CD4-positive, alpha-beta T cell (primary cell): ENCODE measurements at regions of chr12 and their contacts with region 1.

Region 1: DNA sequence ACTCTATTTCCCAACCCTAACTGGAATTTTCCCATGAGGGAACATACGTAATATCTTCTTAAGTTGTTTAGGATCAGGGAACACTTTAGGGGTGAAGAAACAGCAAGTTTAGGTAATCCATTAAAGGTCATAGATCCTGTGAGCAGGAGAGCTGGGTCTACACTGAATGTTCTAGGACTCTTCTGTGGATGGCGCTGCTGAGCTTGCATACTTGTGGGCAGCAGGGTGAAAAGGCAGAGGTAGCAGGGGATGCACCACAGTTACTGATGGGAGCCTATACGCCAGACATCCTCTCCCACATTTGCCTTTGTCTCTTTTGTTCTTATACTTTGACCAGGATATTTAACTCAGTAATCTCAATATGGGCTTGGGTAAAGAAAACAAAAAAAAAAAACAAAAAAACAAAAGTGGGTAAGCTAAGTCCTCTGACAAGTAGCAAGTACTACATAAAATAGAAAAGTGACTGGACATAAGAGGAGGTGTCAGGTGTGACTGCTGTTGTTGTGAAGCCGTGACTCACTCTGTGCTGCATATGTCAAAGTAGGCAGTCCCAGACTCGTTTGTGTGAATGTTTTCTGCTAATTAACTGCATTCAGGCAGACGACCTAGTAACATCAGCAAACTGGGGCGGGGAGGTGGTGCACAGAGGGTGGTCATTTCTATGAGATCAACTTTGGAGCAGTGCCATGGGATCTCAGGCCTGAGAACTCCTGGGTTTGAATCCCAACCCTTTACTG is 31.6 kb downstream of the NEUROD4 start:
- DNase-seq: no peak
- ATAC-seq: no peak
- H3K4me3 ChIP-seq: no peak overlapping the region
- H3K4me3 Mint-ChIP-seq: no peak overlapping the region
- H3K27ac ChIP-seq: no peak overlapping the region
- H3K27ac Mint-ChIP-seq: no peak overlapping the region
- H3K4me1 ChIP-seq: no peaks in the 10 kb centered on the region
- H3K4me1 Mint-ChIP-seq: no peaks in the 10 kb centered on the region
- H3K27me3 ChIP-seq: no peaks in the 10 kb centered on the region
- H3K27me3 Mint-ChIP-seq: no peaks in the 10 kb centered on the region
- CTCF ChIP-seq: no peak

Region 2: DNA sequence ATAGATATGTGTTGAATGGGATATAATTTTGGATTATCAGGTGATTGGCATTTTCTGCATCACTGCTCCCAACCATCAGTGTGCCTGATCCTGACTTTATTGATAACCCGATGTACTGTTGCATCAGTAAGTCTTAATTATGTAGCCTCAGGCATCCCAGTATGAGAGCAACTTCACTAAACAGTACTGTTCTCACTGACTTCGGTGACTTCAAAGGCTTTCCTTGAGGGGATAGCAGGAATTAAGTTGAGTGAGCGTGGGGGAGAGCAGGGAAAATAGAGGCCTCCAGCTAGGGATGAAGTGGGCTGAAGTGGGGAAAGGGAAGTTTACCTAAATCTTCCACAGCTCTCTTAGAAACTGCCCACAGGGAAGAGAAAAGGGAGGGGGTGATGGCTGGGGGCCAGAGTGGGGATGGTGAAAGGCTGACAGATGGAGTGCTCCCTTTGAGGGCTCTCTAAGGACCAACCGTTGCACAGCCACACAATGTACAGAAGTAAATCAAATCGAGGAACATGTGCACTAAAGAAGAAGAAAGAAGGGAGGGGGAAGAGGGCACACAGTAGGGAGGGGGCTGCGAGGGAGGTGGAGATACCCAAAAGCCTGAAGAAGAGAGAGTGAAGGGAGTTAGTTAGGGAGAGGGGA is 42.3 kb before region 1 on chr12:
- CTCF ChIA-PET with region 1: no interaction called
- POLR2A ChIA-PET with region 1: no interaction called
- intact Hi-C with region 1: loop called in 1 of 2 experiments (anchors 5 kb)
- DNase-seq: no peak
- ATAC-seq: no peak
- H3K4me3 ChIP-seq: no peak overlapping the region
- H3K4me3 Mint-ChIP-seq: no peak overlapping the region
- H3K27ac ChIP-seq: no peak overlapping the region
- H3K27ac Mint-ChIP-seq: no peak overlapping the region
- H3K4me1 ChIP-seq: no peaks in the 10 kb centered on the region
- H3K4me1 Mint-ChIP-seq: no peaks in the 10 kb centered on the region
- H3K27me3 ChIP-seq: no peaks in the 10 kb centered on the region
- H3K27me3 Mint-ChIP-seq: peaks cover 6% of the 10 kb centered on the region
- CTCF ChIP-seq: no peak